ENCODE measurements at regions of chr3 and their contacts with region 1.

Region 1: GRCh38 chr3:100073899-100074307 is 40.4 kb downstream of the FILIP1L start:
- DNase-seq: peak; percentile 45
- ATAC-seq: peak; percentile 34
- H3K4me3 ChIP-seq: peak overlapping the region; percentile 9 to 48 (median 28)
- H3K4me3 Mint-ChIP-seq: peak overlapping the region; percentile 86
- H3K27ac ChIP-seq: peak overlapping the region; percentile 13 to 34
- H3K27ac Mint-ChIP-seq: peak overlapping the region; percentile 85
- H3K4me1 ChIP-seq: peaks cover 40 to 41% of the 10 kb centered on the region in 2 donors
- H3K4me1 Mint-ChIP-seq: peaks cover 44% of the 10 kb centered on the region
- H3K27me3 ChIP-seq: no peaks in the 10 kb centered on the region
- H3K27me3 Mint-ChIP-seq: no peaks in the 10 kb centered on the region
- CTCF ChIP-seq: no peak

Region 2: GRCh38 chr3:99875929-99876841 is 197.7 kb before region 1 on chr3:
- CTCF ChIA-PET with region 1: interaction called, 4 read pairs
- POLR2A ChIA-PET with region 1: no interaction called
- intact Hi-C with region 1: loop called (anchors 5 kb)
- DNase-seq: peak; percentile 86
- ATAC-seq: peak; percentile 97
- H3K4me3 ChIP-seq: peak overlapping the region; percentile 52 to 74 (median 64)
- H3K4me3 Mint-ChIP-seq: peak overlapping the region; percentile 89
- H3K27ac ChIP-seq: peak overlapping the region; percentile 24 to 71
- H3K27ac Mint-ChIP-seq: peak overlapping the region; percentile 5
- H3K4me1 ChIP-seq: peaks cover 6 to 8% of the 10 kb centered on the region in 2 donors
- H3K4me1 Mint-ChIP-seq: peaks cover 18% of the 10 kb centered on the region
- H3K27me3 ChIP-seq: no peaks in the 10 kb centered on the region
- H3K27me3 Mint-ChIP-seq: no peaks in the 10 kb centered on the region
- CTCF ChIP-seq: no peak

Region 3: DNA sequence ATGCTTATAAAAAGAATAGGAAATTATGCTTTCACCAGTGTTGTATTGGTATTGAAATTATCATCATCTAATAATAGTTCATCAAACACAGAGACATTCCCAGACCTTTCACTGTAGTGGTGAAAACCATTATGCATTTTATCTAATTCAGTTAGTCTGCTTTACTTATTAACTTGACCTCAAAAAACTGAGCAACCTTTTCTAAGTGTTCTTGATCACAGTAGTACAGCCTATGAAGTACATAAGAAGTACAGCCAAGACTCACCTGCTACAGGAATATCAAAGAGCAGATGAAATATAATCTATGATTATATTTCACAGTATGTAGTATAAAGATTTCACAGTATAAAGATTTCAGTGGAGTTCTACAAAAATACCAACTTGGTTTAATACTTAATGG is 34.8 kb before region 1 on chr3:
- CTCF ChIA-PET with region 1: interaction called, 17 read pairs
- POLR2A ChIA-PET with region 1: interaction called, 4 read pairs
- intact Hi-C with region 1: loop called (anchors 5 kb)
- DNase-seq: no peak
- ATAC-seq: no peak
- H3K4me3 ChIP-seq: no peak overlapping the region
- H3K4me3 Mint-ChIP-seq: no peak overlapping the region
- H3K27ac ChIP-seq: no peak overlapping the region
- H3K27ac Mint-ChIP-seq: no peak overlapping the region
- H3K4me1 ChIP-seq: peaks cover 22 to 31% of the 10 kb centered on the region in 2 donors
- H3K4me1 Mint-ChIP-seq: peaks cover 37% of the 10 kb centered on the region
- H3K27me3 ChIP-seq: no peaks in the 10 kb centered on the region
- H3K27me3 Mint-ChIP-seq: no peaks in the 10 kb centered on the region
- CTCF ChIP-seq: no peak

Region 4: GRCh38 chr3:100087198-100087597 is 13.3 kb after region 1 on chr3:
- CTCF ChIA-PET with region 1: interaction called, 13 read pairs
- POLR2A ChIA-PET with region 1: no interaction called
- intact Hi-C with region 1: loop called (anchors 2 kb)
- DNase-seq: no peak
- ATAC-seq: no peak
- H3K4me3 ChIP-seq: no peak overlapping the region
- H3K4me3 Mint-ChIP-seq: no peak overlapping the region
- H3K27ac ChIP-seq: no peak overlapping the region
- H3K27ac Mint-ChIP-seq: no peak overlapping the region
- H3K4me1 ChIP-seq: peaks cover 3 to 8% of the 10 kb centered on the region in 2 donors
- H3K4me1 Mint-ChIP-seq: peaks cover 20% of the 10 kb centered on the region
- H3K27me3 ChIP-seq: no peaks in the 10 kb centered on the region
- H3K27me3 Mint-ChIP-seq: no peaks in the 10 kb centered on the region
- CTCF ChIP-seq: no peak